IMR-90 (cell line): ENCODE measurements at regions of chr9 and their contacts with region 1.

Region 1: DNA sequence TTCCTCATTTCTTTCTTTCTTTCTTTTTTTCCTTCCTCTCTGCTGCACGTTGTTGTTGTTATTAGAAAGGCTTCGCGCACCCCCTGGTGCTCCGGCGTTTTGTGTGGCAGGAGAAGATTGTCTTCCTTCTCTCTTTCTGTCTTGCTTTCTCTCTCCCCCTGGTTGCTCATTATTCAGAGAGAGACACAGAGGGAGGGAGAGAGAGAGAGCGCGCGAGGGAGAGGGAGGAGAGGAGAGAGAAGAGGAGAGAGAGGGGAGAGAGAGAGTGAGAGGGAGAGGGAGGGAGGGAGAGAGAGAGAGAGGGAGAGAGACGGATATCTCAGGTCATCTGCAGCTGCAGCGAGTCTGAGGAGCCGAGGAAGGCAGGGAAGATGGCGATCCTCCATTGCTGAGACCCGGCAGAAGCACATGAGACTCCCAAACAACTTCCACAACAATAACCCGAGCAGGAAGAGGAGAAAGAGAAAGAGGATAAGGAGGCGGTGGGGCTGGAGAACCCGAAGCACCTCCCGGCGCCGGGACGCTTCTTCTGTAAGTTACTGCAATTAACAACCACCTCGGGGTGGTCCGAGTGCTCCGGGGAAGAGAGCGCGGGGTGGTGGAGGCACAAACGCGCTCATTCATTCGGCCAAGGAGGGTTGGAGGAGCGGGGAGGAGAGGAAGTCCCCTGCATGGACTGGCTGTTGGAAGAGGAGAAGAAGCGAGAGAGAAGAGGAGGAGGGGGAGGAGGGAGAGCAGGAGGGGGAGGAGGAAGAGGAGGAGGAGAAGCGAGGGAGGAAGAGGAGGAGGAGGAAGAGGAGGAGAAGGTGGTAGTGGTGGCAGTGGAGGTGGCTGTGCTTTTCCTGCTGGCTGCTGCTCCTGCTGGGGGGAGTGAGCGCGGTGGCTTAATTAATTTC is at the start of gene ZNF462:
- DNase-seq: peak; percentile 79
- ATAC-seq: peak; percentile 43
- H3K4me3 ChIP-seq: peak within 1 kb of the TSS; percentile 68
- H3K27ac ChIP-seq: peak within 1 kb of the TSS; percentile 89
- H3K4me1 ChIP-seq: no peaks in the 10 kb centered on the region
- H3K27me3 ChIP-seq: peaks cover 9% of the 10 kb centered on the region
- CTCF ChIP-seq: peak; percentile 32; the same call in 1 of the 2 replicates
- POLR2A ChIP-seq: peak; percentile 16; the same call in 1 of the 2 replicates
- RAD21 ChIP-seq: peak; percentile 26
- total RNA-seq, gene ZNF462: 16.1 and 18.8 TPM in 2 replicates

Region 2: GRCh38 chr9:105842023-105842644 is 1020.9 kb before region 1 on chr9:
- CTCF ChIA-PET with region 1: interaction called, 3 read pairs
- POLR2A ChIA-PET with region 1: no interaction called
- dilution Hi-C with region 1: no loop called
- in situ Hi-C with region 1: no loop called
- intact Hi-C with region 1: loop called (anchors 1 kb)
- DNase-seq: peak; percentile 47
- ATAC-seq: peak; percentile 73; the same call in 1 of the 2 replicates
- H3K4me3 ChIP-seq: no peak overlapping the region
- H3K27ac ChIP-seq: no peak overlapping the region
- H3K4me1 ChIP-seq: no peaks in the 10 kb centered on the region
- H3K27me3 ChIP-seq: no peaks in the 10 kb centered on the region
- CTCF ChIP-seq: peak; percentile 92
- POLR2A ChIP-seq: no peak
- RAD21 ChIP-seq: peak; percentile 73

Region 3: DNA sequence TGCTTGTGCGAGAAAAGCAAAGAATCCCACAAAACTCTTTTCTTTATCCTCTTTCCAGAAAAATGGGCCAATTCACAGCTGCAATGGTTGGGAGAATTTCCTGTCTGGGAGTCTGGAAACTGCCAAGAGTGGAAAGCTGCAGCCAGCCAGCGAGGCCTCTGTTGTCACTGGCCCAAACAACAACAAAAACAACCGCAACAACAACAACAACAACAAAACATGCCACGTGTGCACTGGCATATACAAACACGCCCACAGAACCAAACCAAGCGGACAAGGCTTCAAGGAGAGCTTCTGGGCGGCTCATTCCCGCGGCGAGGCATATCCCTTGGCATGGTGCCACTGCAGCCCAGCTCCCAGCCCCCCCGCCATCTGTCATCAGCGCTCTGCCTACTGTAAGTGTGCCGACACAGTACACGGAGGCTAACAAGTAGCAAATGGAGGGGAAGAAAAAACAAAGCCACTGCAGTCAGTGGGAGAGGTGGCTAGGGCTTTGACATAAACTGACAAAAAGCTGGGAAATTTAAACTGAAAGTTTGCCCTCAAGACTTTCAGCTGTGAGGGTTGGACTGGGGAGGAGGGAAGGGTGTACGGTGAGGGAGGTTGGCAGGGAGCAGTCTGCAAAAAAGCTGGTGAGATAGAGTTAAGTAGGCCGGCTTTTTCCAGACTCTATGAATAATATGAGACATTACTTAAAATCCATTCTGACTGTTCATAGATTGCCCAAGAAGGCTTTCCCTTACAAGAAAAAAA is 165.1 kb before region 1 on chr9:
- CTCF ChIA-PET with region 1: no interaction called
- POLR2A ChIA-PET with region 1: interaction called, 4 read pairs
- dilution Hi-C with region 1: no loop called
- in situ Hi-C with region 1: no loop called
- intact Hi-C with region 1: loop called (anchors 1 kb)
- DNase-seq: peak; percentile 46
- ATAC-seq: peak; percentile 90
- H3K4me3 ChIP-seq: peak overlapping the region; percentile 6; the same call in 1 of the 2 replicates
- H3K27ac ChIP-seq: no peak overlapping the region; the same call in 1 of the 2 replicates
- H3K4me1 ChIP-seq: peaks cover 3% of the 10 kb centered on the region; the same call in 1 of the 2 replicates
- H3K27me3 ChIP-seq: no peaks in the 10 kb centered on the region; the same call in 1 of the 2 replicates
- CTCF ChIP-seq: no peak
- POLR2A ChIP-seq: no peak
- RAD21 ChIP-seq: no peak

Region 4: GRCh38 chr9:106878924-106879323 is 15.9 kb after region 1 on chr9:
- CTCF ChIA-PET with region 1: no interaction called
- POLR2A ChIA-PET with region 1: interaction called, 24 read pairs
- dilution Hi-C with region 1: no loop called
- in situ Hi-C with region 1: no loop called
- intact Hi-C with region 1: loop called (anchors 2 kb)
- DNase-seq: peak; percentile 99
- ATAC-seq: peak; percentile 86
- H3K4me3 ChIP-seq: no peak overlapping the region
- H3K27ac ChIP-seq: peak overlapping the region; percentile 13; the same call in 1 of the 2 replicates
- H3K4me1 ChIP-seq: peaks cover 26% of the 10 kb centered on the region
- H3K27me3 ChIP-seq: no peaks in the 10 kb centered on the region
- CTCF ChIP-seq: no peak
- POLR2A ChIP-seq: no peak
- RAD21 ChIP-seq: no peak

Region 5: DNA sequence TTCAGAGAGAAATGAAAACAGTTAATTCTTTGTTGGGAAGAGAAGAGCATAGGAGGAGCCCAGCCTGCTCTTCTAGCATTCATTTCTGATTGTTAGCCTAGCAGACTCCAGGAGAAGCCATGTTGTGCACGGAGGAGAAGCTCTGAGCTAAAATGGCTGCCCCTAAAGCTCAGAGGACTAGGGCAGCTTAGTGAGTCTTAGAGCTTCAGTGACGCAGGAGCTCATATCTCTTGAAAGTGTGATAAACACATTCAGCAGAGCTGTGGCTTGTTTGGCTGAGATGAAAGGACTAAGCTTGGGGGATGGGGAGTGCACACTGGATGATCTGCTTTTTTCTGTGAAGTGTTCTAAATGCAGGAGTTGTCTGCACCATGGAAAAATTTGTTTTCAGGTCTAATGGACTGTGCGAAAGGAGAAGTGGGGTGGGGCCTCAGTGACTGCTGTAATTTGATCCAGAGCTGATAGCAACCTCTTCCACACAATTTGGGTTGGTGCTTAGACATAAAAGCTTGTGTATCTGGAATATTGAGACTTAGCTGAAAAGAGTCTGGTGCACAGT is 58.3 kb after region 1 on chr9:
- CTCF ChIA-PET with region 1: interaction called, 3 read pairs
- POLR2A ChIA-PET with region 1: no interaction called
- dilution Hi-C with region 1: no loop called
- in situ Hi-C with region 1: loop called (anchors 5 kb)
- intact Hi-C with region 1: loop called (anchors 1 kb)
- DNase-seq: peak; percentile 84
- ATAC-seq: peak; percentile 87
- H3K4me3 ChIP-seq: peak overlapping the region; percentile 0; the same call in 1 of the 2 replicates
- H3K27ac ChIP-seq: peak overlapping the region; percentile 83
- H3K4me1 ChIP-seq: peaks cover 15% of the 10 kb centered on the region
- H3K27me3 ChIP-seq: no peaks in the 10 kb centered on the region
- CTCF ChIP-seq: no peak
- POLR2A ChIP-seq: 0 out of 2 replicates have a peak, but pooled peaks have one; percentile 23
- RAD21 ChIP-seq: 0 out of 2 replicates have a peak, but pooled peaks have one; percentile 12

Region 6: DNA sequence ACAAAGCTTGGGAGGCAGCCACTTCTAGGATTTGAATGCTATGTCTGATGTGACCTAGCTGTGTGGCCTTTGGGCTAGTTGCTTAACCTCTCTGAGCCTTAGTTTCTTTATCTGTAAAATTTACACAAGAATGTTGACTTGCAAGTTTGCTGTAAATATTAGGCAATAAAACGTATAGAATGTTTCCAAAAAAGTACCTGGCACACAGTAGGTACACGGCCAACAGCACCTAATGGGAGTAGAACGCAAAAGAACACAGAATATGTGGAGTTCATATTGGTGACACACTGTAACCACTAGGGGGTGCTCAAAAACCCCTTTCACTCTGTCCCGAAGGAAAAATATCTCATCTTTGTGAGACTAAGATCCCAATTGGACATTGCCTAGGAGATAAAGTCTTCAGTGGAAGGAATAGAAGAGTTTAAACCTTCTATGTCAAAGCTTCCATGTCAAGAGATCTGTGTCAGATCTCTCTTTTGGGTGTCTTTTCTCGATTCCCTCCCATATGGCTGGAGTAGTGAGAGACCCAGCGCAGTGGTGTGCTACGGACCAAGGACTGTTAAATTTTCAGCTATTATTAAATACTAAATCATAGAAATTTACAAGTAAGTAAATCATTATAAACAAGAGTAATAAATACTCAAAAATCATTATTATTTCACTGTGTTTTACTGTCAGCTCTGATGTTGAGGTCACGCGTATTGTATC is 274.6 kb after region 1 on chr9:
- CTCF ChIA-PET with region 1: no interaction called
- POLR2A ChIA-PET with region 1: no interaction called
- dilution Hi-C with region 1: no loop called
- in situ Hi-C with region 1: no loop called
- intact Hi-C with region 1: loop called (anchors 5 kb)
- DNase-seq: peak; percentile 33
- ATAC-seq: peak; percentile 79
- H3K4me3 ChIP-seq: no peak overlapping the region
- H3K27ac ChIP-seq: no peak overlapping the region
- H3K4me1 ChIP-seq: no peaks in the 10 kb centered on the region
- H3K27me3 ChIP-seq: peaks cover 25% of the 10 kb centered on the region
- CTCF ChIP-seq: peak; percentile 67
- POLR2A ChIP-seq: no peak
- RAD21 ChIP-seq: peak; percentile 65

Region 7: GRCh38 chr9:107282753-107283625 is 419.9 kb after region 1 on chr9 and contains the start of gene RAD23B:
- CTCF ChIA-PET with region 1: no interaction called
- POLR2A ChIA-PET with region 1: interaction called, 4 read pairs
- dilution Hi-C with region 1: no loop called
- in situ Hi-C with region 1: no loop called
- intact Hi-C with region 1: loop called (anchors 10 kb)
- DNase-seq: peak; percentile 98
- ATAC-seq: peak; percentile 89
- H3K4me3 ChIP-seq: peak within 1 kb of the TSS; percentile 79
- H3K27ac ChIP-seq: peak within 1 kb of the TSS; percentile 96
- H3K4me1 ChIP-seq: no peaks in the 10 kb centered on the region
- H3K27me3 ChIP-seq: no peaks in the 10 kb centered on the region
- CTCF ChIP-seq: no peak
- POLR2A ChIP-seq: peak; percentile 93
- RAD21 ChIP-seq: no peak
- total RNA-seq, gene RAD23B: 126 and 127 TPM in 2 replicates

Region 8: GRCh38 chr9:107367727-107368502 is 504.8 kb after region 1 on chr9:
- CTCF ChIA-PET with region 1: no interaction called
- POLR2A ChIA-PET with region 1: no interaction called
- dilution Hi-C with region 1: no loop called
- in situ Hi-C with region 1: no loop called
- intact Hi-C with region 1: no loop called
- DNase-seq: no peak
- ATAC-seq: peak; percentile 27
- H3K4me3 ChIP-seq: no peak overlapping the region
- H3K27ac ChIP-seq: no peak overlapping the region
- H3K4me1 ChIP-seq: no peaks in the 10 kb centered on the region
- H3K27me3 ChIP-seq: peaks cover 3% of the 10 kb centered on the region
- CTCF ChIP-seq: no peak
- POLR2A ChIP-seq: no peak
- RAD21 ChIP-seq: no peak